HCT116 (cell line): ENCODE measurements at regions of chr7 and their contacts with region 1.

Region 1: GRCh38 chr7:101882595-101883564 is 65.5 kb downstream of the CUX1 start:
- DNase-seq: peak; percentile 98
- ATAC-seq: peak; percentile 97
- H3K4me3 ChIP-seq: peak overlapping the region in 1 of 2 experiments; percentile 44; a peak in 2 of 4 replicates
- H3K27ac ChIP-seq: peak overlapping the region; percentile 96
- H3K4me1 ChIP-seq: peaks cover 53 to 82% of the 10 kb centered on the region in 2 experiments
- H3K27me3 ChIP-seq: no peaks in the 10 kb centered on the region
- CTCF ChIP-seq: no peak
- POLR2A ChIP-seq: no peak
- RAD21 ChIP-seq: peak; percentile 46; the same call in 1 of the 2 replicates

Region 2: DNA sequence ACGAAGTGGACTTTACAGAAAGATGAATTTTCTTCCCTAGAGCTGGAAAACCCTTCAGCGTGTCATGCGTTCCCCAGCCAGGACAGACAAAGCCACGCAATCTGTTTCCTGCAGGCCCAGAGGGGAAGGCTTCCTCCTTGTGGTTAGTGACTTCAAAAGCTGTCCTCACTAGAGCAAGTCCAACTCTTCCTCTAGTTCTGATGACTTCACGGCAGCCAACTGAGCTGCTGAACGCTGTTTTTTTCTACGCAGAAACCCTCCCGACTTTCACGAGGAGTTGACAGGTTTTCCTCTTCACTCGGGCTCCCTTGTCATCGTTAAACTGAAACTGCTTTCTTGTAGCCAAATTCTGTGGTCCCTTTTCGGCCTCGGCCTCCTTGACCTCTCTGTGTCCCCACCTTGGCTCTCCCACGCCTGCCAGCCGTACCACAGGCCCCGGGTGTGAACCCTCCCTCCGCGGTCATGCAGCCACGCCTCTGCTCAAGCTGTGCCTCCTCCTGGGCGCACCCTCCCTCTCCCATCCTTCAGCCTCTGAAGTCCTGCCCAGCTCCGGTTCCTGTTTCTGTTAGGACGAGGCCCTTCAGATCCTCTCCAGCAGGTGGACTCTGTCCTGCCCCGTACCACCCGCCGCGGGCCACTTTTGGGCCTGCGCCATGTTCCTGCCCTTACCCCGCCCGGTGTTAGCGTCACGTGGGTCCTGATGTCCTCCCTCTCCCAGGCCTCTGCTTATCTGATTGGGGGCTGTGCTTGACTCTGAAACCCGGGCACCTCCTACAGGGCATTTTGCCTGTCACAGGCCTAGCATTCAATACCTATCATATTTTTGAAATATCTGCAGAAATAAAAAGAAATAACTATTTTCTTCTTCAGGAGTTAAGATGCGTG is 26.2 kb before region 1 on chr7:
- CTCF ChIA-PET with region 1: interaction called, 4 read pairs
- POLR2A ChIA-PET with region 1: no interaction called
- RAD21 ChIA-PET with region 1: no interaction called
- intact Hi-C with region 1: loop called (anchors 2 kb)
- DNase-seq: peak; percentile 97
- ATAC-seq: peak; percentile 95
- H3K4me3 ChIP-seq: peak overlapping the region; percentile 23 to 45
- H3K27ac ChIP-seq: peak overlapping the region; percentile 69
- H3K4me1 ChIP-seq: peaks cover 22 to 52% of the 10 kb centered on the region in 2 experiments
- H3K27me3 ChIP-seq: no peaks in the 10 kb centered on the region
- CTCF ChIP-seq: peak; percentile 28 to 64 (median 59); a peak in 4 of 6 replicates
- POLR2A ChIP-seq: no peak
- RAD21 ChIP-seq: peak; percentile 75

Region 3: DNA sequence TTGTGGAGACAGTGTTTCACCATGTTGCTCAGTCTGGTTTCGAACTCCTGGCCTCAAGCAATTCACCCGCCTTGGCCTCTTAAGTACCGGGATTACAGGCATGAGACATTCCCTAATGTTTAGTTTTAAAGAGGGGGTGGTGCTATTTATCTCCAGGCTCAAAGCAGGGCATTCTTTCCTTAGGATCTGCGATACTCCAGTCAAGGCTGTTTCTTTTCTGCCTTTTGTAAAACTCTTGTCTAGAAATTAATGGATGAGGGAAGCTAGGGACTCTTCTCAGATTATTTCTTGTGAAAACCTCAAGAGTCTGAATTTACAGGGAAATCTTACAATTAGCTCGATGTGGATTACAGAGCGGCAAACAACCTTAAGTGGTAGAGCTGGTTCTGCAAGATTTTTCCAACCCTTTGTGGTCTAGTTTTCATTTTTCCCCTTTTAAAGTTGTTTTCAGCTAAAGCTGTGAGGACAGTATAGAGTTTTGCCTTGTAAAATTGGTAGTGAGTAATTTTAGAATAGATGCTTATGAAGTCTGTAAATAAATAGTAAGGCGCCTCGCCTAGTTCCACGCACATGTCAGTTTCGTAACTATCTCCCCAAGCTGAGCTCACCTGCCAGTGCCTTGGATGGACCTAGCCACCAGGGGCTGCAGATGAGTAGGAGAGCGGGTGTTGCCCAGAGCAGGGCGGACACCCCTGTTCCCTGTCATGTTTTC is 12.4 kb before region 1 on chr7:
- CTCF ChIA-PET with region 1: interaction called, 12 read pairs
- POLR2A ChIA-PET with region 1: interaction called, 9 read pairs
- RAD21 ChIA-PET with region 1: no interaction called
- intact Hi-C with region 1: no loop called
- DNase-seq: peak; percentile 52
- ATAC-seq: peak; percentile 90
- H3K4me3 ChIP-seq: peak overlapping the region; percentile 13 to 26; a peak in 3 of 4 replicates
- H3K27ac ChIP-seq: peak overlapping the region; percentile 54
- H3K4me1 ChIP-seq: peaks cover 35 to 53% of the 10 kb centered on the region in 2 experiments
- H3K27me3 ChIP-seq: no peaks in the 10 kb centered on the region
- CTCF ChIP-seq: peak; percentile 25 to 66 (median 56); a peak in 5 of 6 replicates
- POLR2A ChIP-seq: no peak
- RAD21 ChIP-seq: peak; percentile 61

Region 4: GRCh38 chr7:101985903-101986734 is 103.2 kb after region 1 on chr7:
- CTCF ChIA-PET with region 1: no interaction called
- POLR2A ChIA-PET with region 1: no interaction called
- RAD21 ChIA-PET with region 1: no interaction called
- intact Hi-C with region 1: loop called (anchors 2 kb)
- DNase-seq: no peak
- ATAC-seq: no peak
- H3K4me3 ChIP-seq: no peak overlapping the region
- H3K27ac ChIP-seq: no peak overlapping the region
- H3K4me1 ChIP-seq: peaks cover 15 to 69% of the 10 kb centered on the region in 2 experiments
- H3K27me3 ChIP-seq: no peaks in the 10 kb centered on the region
- CTCF ChIP-seq: no peak
- POLR2A ChIP-seq: no peak
- RAD21 ChIP-seq: no peak

Region 5: DNA sequence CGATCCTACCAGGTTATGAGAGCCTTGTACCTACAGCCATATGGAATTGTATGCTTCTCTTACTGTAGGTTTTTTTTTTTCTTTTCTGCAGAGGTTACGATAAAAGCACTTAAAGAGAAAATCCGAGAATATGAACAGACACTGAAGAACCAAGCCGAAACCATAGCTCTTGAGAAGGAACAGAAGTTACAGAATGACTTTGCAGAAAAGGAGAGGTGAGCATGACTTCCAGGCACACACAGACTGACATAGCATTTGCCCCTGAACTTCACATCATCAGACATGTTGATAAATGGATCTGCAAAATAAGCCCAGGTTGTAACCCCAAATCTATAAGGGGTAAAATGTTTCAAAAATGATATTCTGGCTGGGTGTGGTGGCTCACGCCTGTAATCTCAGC is 221.4 kb after region 1 on chr7:
- CTCF ChIA-PET with region 1: no interaction called
- POLR2A ChIA-PET with region 1: no interaction called
- RAD21 ChIA-PET with region 1: no interaction called
- intact Hi-C with region 1: no loop called
- DNase-seq: no peak
- ATAC-seq: no peak
- H3K4me3 ChIP-seq: no peak overlapping the region
- H3K27ac ChIP-seq: no peak overlapping the region
- H3K4me1 ChIP-seq: peaks cover 28 to 40% of the 10 kb centered on the region in 2 experiments
- H3K27me3 ChIP-seq: no peaks in the 10 kb centered on the region
- CTCF ChIP-seq: no peak
- POLR2A ChIP-seq: no peak
- RAD21 ChIP-seq: no peak